Transverse colon (tissue), 4 donors: ENCODE measurements at regions of chr12 and their contacts with region 1.

Region 1: GRCh38 chr12:53213348-53213747 is 6.3 kb upstream of the ITGB7 start:
- DNase-seq: peak; percentile 87
- H3K4me3 ChIP-seq: no peak overlapping the region
- H3K27ac ChIP-seq: peak overlapping the region in 1 of 4 donors; percentile 4
- H3K4me1 ChIP-seq: peaks cover 20 to 40% (median 22%) of the 10 kb centered on the region in 4 donors
- H3K27me3 ChIP-seq: no peaks in the 10 kb centered on the region
- CTCF ChIP-seq: peak; percentile 92 to 97 (median 95)
- EP300 ChIP-seq: no peak
- POLR2A ChIP-seq: no peak

Region 2: DNA sequence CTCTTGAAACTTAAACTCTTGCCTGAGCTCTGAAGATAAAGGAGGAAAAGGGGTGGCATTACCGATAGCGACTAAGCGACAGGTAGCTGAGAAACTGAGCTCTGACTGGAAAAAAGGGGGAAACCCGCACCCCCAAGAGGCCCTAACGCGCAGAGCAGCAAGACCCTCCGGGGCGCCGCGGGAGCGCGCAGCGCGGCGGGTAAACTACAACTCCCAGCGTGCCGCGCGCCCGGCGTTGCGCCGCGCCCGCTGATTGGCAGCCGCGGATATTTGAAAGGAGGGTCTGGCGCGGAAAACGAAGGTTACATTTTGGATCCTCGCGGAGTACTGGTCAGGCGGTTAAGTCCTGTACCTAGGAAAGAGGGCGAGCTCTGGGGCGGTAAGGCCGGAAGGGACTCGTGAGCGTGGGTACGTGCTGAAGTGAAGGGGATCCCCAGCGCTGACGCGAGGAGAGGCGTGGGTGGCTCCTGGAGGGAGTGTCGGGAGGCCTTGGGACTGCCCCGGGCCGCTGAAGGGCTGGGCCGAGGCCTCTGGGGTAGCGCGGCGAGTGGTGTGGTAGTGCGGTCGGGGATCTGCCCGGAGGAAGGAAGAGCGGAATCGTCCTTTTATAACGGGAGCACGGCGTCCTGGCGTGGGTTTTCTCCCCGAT is 54.8 kb after region 1 on chr12 and contains the start of gene ESPL1:
- in situ Hi-C with region 1: no loop called
- intact Hi-C with region 1: no loop called
- DNase-seq: peak; percentile 76
- H3K4me3 ChIP-seq: peak within 1 kb of the TSS; percentile 33 to 79 (median 58)
- H3K27ac ChIP-seq: peak within 1 kb of the TSS; percentile 49 to 73 (median 52)
- H3K4me1 ChIP-seq: peaks cover 0 to 12% (median 8%) of the 10 kb centered on the region in 4 donors
- H3K27me3 ChIP-seq: no peaks in the 10 kb centered on the region
- CTCF ChIP-seq: peak in 2 of 5 experiments; percentile 26 to 36
- EP300 ChIP-seq: no peak
- POLR2A ChIP-seq: no peak
- total RNA-seq, gene ESPL1: 6.5 to 31.8 (median 18.8) TPM

Region 3: DNA sequence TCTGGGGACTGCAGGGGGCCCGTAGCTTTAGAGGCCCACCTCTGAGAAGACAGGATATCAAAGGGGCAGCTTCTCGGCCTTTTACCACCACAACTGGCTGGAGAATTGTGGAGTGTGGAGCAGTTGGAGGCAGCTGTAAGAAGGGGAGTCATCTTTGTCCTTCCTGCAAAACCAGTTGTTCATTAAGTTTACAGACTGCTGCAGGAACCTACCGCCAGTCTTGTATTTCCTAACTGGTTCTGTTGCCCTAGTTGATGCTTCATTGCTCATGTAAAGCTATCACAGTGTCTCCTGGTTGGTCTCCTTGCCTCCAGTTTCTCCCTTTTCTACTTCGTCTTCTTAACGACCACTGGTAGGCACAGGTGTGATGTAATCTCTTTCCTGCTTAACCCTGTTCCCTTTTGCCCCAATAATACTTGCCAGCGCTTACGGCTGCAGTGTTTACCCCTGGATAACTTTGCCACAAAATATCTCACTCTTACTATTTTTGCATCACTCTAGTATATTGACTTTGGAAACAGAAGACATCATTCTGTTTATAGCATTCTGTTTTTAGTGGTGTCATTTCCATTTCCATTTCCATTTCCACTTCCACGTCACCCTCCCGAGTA is 66.6 kb after region 1 on chr12:
- in situ Hi-C with region 1: loop called in 3 of 4 experiments (anchors 5 to 10 kb)
- intact Hi-C with region 1: loop called (anchors 5 kb)
- DNase-seq: no peak
- H3K4me3 ChIP-seq: no peak overlapping the region
- H3K27ac ChIP-seq: no peak overlapping the region
- H3K4me1 ChIP-seq: no peaks in the 10 kb centered on the region
- H3K27me3 ChIP-seq: no peaks in the 10 kb centered on the region
- CTCF ChIP-seq: no peak
- EP300 ChIP-seq: no peak
- POLR2A ChIP-seq: no peak

Region 4: GRCh38 chr12:53287741-53288216 is 74.4 kb after region 1 on chr12:
- in situ Hi-C with region 1: loop called in 3 of 4 experiments (anchors 5 to 10 kb)
- intact Hi-C with region 1: loop called (anchors 5 kb)
- DNase-seq: peak; percentile 79
- H3K4me3 ChIP-seq: no peak overlapping the region
- H3K27ac ChIP-seq: no peak overlapping the region
- H3K4me1 ChIP-seq: no peaks in the 10 kb centered on the region
- H3K27me3 ChIP-seq: no peaks in the 10 kb centered on the region
- CTCF ChIP-seq: peak; percentile 56 to 85 (median 63)
- EP300 ChIP-seq: no peak
- POLR2A ChIP-seq: no peak